Ascending aorta (tissue), 2 donors: ENCODE measurements at regions of chr9 and their contacts with region 1.

Region 1: GRCh38 chr9:36487482-36488388 is 85.0 kb upstream of the MELK start:
- DNase-seq: peak; percentile 63 to 95
- H3K4me3 ChIP-seq: peak overlapping the region; percentile 74 to 99
- H3K27ac ChIP-seq: peak overlapping the region; percentile 87 to 93
- H3K4me1 ChIP-seq: peaks cover 0 to 25% of the 10 kb centered on the region in 2 donors
- H3K27me3 ChIP-seq: no peaks in the 10 kb centered on the region
- CTCF ChIP-seq: peak in 1 of 3 experiments; percentile 19

Region 2: DNA sequence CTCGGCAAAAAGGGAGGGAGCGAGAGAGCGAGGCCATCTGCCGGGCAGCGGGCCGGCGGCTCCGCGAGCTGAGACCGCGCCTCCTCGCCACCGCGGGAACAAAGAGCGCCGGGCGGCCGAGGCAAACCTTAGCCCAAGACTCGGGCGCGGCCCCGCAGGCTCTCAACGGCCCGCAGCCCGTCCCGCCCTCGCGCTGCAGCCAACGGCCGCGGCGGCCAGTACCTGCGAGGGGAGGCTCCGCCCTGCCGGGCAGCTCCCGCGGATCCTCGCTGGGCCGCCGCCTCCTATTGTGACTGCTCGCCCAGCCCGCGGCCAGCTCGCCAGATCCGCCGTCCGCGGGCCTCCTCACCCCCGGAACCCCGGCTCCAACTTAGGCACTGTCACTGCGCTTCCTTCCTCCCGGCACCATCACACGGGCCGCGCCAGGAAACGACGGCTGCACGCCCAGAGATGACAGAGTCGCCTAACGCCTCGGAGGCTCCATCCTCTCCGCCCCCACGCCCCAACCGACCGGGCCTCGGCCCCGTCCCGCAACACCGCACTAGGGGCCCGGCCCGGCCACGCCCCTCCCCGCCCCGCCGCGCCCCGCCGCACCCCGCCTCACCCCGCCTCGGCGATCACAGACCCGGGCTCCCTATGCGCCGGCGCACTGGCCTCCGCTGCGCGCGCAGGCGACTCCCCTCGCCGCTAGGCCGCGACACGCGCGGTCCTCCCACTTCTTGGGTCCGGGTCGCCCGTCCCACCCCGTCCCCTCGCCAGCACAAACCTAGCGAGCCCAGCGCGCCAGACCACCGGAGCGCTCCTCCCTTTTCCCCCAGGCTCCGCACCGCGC is 87.2 kb before region 1 on chr9:
- intact Hi-C with region 1: loop called (anchors 1 kb)
- DNase-seq: peak; percentile 38 to 90
- H3K4me3 ChIP-seq: peak overlapping the region; percentile 64 to 79
- H3K27ac ChIP-seq: peak overlapping the region; percentile 87 to 94
- H3K4me1 ChIP-seq: peaks cover 0 to 9% of the 10 kb centered on the region in 2 donors
- H3K27me3 ChIP-seq: no peaks in the 10 kb centered on the region
- CTCF ChIP-seq: peak in 1 of 3 experiments; percentile 17

Region 3: DNA sequence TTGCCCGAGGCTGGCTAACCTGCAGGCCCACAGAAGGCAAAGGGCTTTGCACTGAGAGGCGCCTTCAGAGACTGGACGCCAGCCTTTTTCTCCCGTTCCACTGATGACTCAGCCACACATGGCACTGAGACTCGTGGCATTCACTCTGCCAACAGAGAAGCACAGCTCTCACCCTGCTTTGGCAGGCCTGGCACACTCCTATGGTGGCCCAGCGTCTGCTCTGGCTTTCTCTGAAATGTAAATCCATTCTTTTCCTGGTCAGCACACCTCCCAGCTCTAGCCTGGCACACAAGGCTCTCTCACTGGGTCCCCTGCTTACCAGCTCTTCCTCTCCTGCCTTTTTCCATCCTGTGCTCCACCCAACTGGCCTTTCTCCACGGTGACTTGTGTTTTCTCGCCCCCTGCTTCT is 79.1 kb after region 1 on chr9:
- intact Hi-C with region 1: loop called (anchors 1 kb)
- DNase-seq: peak; percentile 43 to 85
- H3K4me3 ChIP-seq: no peak overlapping the region
- H3K27ac ChIP-seq: peak overlapping the region; percentile 64 to 83
- H3K4me1 ChIP-seq: peaks cover 0 to 6% of the 10 kb centered on the region in 2 donors
- H3K27me3 ChIP-seq: no peaks in the 10 kb centered on the region
- CTCF ChIP-seq: no peak

Region 4: DNA sequence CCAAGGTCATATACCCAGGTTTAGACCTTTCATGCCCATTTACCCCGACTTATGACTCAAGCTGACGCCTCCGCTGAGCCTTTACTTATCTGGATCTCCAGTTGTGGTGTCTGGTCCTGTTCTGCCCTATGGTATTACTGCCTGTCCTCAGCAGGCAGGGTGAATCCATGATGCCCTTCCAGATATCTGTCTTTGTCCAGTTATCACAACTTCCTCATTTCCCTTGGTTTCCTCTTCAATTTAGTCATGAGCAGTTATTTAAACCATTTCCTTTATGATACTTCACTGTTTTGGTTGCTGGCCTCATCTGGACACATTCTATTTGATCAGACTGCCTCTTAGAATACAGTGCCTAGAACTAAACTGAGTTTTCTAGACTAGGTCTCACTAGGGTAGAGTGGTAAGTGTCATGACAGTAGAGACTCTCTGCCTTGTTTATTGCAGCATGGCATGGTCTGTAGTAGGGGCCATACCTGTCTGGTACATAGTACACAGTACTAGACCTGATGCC is 178.2 kb after region 1 on chr9:
- intact Hi-C with region 1: no loop called
- DNase-seq: no peak
- H3K4me3 ChIP-seq: no peak overlapping the region
- H3K27ac ChIP-seq: no peak overlapping the region
- H3K4me1 ChIP-seq: no peaks in the 10 kb centered on the region
- H3K27me3 ChIP-seq: no peaks in the 10 kb centered on the region
- CTCF ChIP-seq: no peak

Region 5: DNA sequence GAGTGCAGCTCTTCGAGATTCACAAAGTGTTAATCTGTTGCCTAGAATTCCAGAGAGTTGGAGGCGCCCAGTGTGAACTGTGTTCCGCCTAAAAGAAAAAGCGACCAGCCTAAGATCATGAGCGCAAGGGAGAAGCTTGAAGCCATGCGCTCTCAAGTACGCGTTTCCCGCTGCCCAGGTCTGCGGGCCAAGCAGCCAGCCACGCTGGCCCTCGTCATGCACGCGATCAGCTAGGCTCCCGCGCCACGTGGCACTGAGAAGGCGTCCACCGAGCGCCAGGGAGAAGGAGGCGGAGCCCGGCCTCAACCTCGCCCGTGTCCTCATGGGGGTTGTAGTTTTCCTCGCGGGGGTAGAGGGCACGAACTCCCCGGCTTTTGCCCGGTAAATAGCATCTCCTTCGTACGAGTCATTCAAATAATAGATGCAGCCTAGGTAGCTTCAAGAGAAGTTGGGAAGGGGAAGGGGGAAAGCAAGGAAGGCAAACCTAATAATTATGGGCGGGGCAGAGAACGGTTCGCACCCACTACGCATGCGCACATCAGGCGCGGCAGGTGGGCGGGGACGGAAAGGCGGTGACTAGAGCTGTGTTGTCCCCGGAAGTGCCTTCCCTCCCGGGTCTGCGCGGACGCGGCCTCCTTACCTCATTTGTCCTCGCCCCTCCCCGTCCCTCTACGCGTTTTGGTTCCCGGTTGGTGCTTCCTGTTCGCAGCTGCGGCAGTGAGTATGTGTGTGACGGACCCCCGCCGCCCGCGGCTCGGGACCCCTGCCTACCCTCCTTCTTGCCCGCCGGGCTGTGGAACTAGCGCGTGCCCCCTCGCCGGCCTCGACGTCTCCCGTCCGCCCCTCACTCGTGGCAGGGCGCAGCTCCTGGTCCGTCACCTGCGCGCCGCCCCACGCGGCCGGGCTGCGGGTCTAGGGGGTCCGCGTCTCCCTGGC is 632.4 kb after region 1 on chr9 and contains the start of gene ZCCHC7:
- intact Hi-C with region 1: loop called (anchors 5 kb)
- DNase-seq: peak; percentile 82 to 98
- H3K4me3 ChIP-seq: peak within 1 kb of the TSS; percentile 88 to 95
- H3K27ac ChIP-seq: peak within 1 kb of the TSS; percentile 95 to 96
- H3K4me1 ChIP-seq: peaks cover 0 to 13% of the 10 kb centered on the region in 2 donors
- H3K27me3 ChIP-seq: no peaks in the 10 kb centered on the region
- CTCF ChIP-seq: no peak
- total RNA-seq, gene ZCCHC7: 25.1 TPM